ENCODE measurements at regions of chr9 and their contacts with region 1.

Region 1: GRCh38 chr9:113993838-113994540 is 84.1 kb downstream of the AMBP start:
- DNase-seq: peak; percentile 91 to 98 (median 96)
- ATAC-seq: peak; percentile 96
- H3K4me3 ChIP-seq: no peak overlapping the region
- H3K27ac ChIP-seq: peak overlapping the region; percentile 12 to 62 (median 48)
- H3K4me1 ChIP-seq: peaks cover 32% of the 10 kb centered on the region
- H3K27me3 ChIP-seq: no peaks in the 10 kb centered on the region
- CTCF ChIP-seq: peak in 3 of 7 experiments; percentile 17 to 35 (median 19)
- POLR2A ChIP-seq: no peak

Region 2: GRCh38 chr9:113868501-113868900 is 125.5 kb before region 1 on chr9:
- intact Hi-C with region 1: loop called (anchors 10 kb)
- DNase-seq: no peak
- ATAC-seq: no peak
- H3K4me3 ChIP-seq: no peak overlapping the region
- H3K27ac ChIP-seq: no peak overlapping the region
- H3K4me1 ChIP-seq: no peaks in the 10 kb centered on the region
- H3K27me3 ChIP-seq: no peaks in the 10 kb centered on the region
- CTCF ChIP-seq: no peak
- POLR2A ChIP-seq: no peak